Activated T-helper 2 cell treated with anti-CD3 and anti-CD28 coated beads, Interferon-gamma antibody, Interleukin-2, Interleukin-4, amounts not matched to agents 10 μg/mL and 5 μg/mL and 100 μg/mL, durations not matched to agents 14 hours and 24 hours and 36 hours (primary cell): ENCODE measurements at regions of chr19 and their contacts with region 1.

Region 1: GRCh38 chr19:46850228-46851203 is at the start of gene AP2S1:
- DNase-seq: peak; percentile 92
- H3K4me3 Mint-ChIP-seq: peak within 1 kb of the TSS; percentile 86
- H3K27ac Mint-ChIP-seq: peak within 1 kb of the TSS; percentile 83
- H3K4me1 Mint-ChIP-seq: peaks cover 21% of the 10 kb centered on the region
- H3K27me3 Mint-ChIP-seq: peaks cover 2% of the 10 kb centered on the region
- total RNA-seq, gene AP2S1: 94.0 and 102 TPM in 2 replicates

Region 2: GRCh38 chr19:46717034-46717723 is 133.3 kb before region 1 on chr19 and contains the start of gene PRKD2:
- intact Hi-C with region 1: no loop called
- DNase-seq: peak; percentile 84
- H3K4me3 Mint-ChIP-seq: peak within 1 kb of the TSS; percentile 94
- H3K27ac Mint-ChIP-seq: peak within 1 kb of the TSS; percentile 92
- H3K4me1 Mint-ChIP-seq: peaks cover 39% of the 10 kb centered on the region
- H3K27me3 Mint-ChIP-seq: no peaks in the 10 kb centered on the region
- total RNA-seq, gene PRKD2: 77.9 and 79.8 TPM in 2 replicates

Region 3: GRCh38 chr19:46766569-46767317 is 83.8 kb before region 1 on chr19:
- intact Hi-C with region 1: no loop called
- DNase-seq: peak; percentile 46
- H3K4me3 Mint-ChIP-seq: no peak overlapping the region
- H3K27ac Mint-ChIP-seq: no peak overlapping the region
- H3K4me1 Mint-ChIP-seq: peaks cover 2% of the 10 kb centered on the region
- H3K27me3 Mint-ChIP-seq: no peaks in the 10 kb centered on the region

Region 4: DNA sequence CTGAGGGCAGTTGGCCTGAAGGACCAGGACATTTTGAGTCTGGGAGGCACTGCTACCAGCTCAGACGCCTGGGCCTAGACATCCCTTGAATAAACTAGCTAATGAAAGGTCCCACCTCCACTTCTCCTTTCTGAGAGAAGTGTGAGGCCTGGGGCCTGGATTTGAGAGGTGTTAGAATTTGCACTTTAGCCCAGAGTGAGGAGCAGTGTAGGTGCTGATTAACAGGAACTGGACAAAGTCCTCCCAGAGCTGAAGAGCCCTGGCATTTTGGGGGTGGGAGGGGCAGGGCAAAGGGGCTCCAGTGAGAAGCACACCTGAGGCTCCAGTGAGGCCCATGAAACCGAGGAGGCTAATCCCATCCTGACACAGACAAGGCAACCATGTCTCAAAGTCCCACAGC is 47.0 kb before region 1 on chr19:
- intact Hi-C with region 1: no loop called
- DNase-seq: no peak
- H3K4me3 Mint-ChIP-seq: no peak overlapping the region
- H3K27ac Mint-ChIP-seq: no peak overlapping the region
- H3K4me1 Mint-ChIP-seq: no peaks in the 10 kb centered on the region
- H3K27me3 Mint-ChIP-seq: peaks cover 5% of the 10 kb centered on the region

Region 5: GRCh38 chr19:46813839-46814363 is 36.6 kb before region 1 on chr19:
- intact Hi-C with region 1: no loop called
- DNase-seq: no peak
- H3K4me3 Mint-ChIP-seq: no peak overlapping the region
- H3K27ac Mint-ChIP-seq: no peak overlapping the region
- H3K4me1 Mint-ChIP-seq: peaks cover under 1% of the 10 kb centered on the region
- H3K27me3 Mint-ChIP-seq: no peaks in the 10 kb centered on the region

Region 6: GRCh38 chr19:47047763-47048405 is 197.4 kb after region 1 on chr19:
- intact Hi-C with region 1: loop called (anchors 1 kb)
- DNase-seq: peak; percentile 77
- H3K4me3 Mint-ChIP-seq: peak overlapping the region; percentile 87
- H3K27ac Mint-ChIP-seq: peak overlapping the region; percentile 82
- H3K4me1 Mint-ChIP-seq: peaks cover 7% of the 10 kb centered on the region
- H3K27me3 Mint-ChIP-seq: peaks cover 3% of the 10 kb centered on the region